ENCODE measurements at regions of chr11 and their contacts with region 1.

Region 1: GRCh38 chr11:9613118-9613829 is 39.8 kb downstream of the WEE1 start:
- DNase-seq: peak; percentile 96
- ATAC-seq: peak; percentile 80
- H3K4me3 ChIP-seq: peak overlapping the region; percentile 63
- H3K27ac ChIP-seq: peak overlapping the region; percentile 86
- H3K4me1 ChIP-seq: peaks cover 26% of the 10 kb centered on the region
- H3K27me3 ChIP-seq: no peaks in the 10 kb centered on the region
- CTCF ChIP-seq: peak; percentile 91

Region 2: GRCh38 chr11:9506489-9507276 is 106.6 kb before region 1 on chr11:
- CTCF ChIA-PET with region 1: interaction called, 6 read pairs
- POLR2A ChIA-PET with region 1: no interaction called
- intact Hi-C with region 1: loop called (anchors 2 kb)
- DNase-seq: peak; percentile 90
- ATAC-seq: peak; percentile 88
- H3K4me3 ChIP-seq: no peak overlapping the region
- H3K27ac ChIP-seq: no peak overlapping the region
- H3K4me1 ChIP-seq: no peaks in the 10 kb centered on the region
- H3K27me3 ChIP-seq: no peaks in the 10 kb centered on the region
- CTCF ChIP-seq: peak; percentile 91

Region 3: GRCh38 chr11:9565822-9566560 is 47.3 kb before region 1 on chr11:
- CTCF ChIA-PET with region 1: no interaction called
- POLR2A ChIA-PET with region 1: no interaction called
- intact Hi-C with region 1: loop called (anchors 1 kb)
- DNase-seq: peak; percentile 99
- ATAC-seq: peak; percentile 83
- H3K4me3 ChIP-seq: peak overlapping the region; percentile 48; the same call in 1 of the 2 replicates
- H3K27ac ChIP-seq: peak overlapping the region; percentile 98
- H3K4me1 ChIP-seq: peaks cover 65% of the 10 kb centered on the region
- H3K27me3 ChIP-seq: no peaks in the 10 kb centered on the region
- CTCF ChIP-seq: no peak

Region 4: DNA sequence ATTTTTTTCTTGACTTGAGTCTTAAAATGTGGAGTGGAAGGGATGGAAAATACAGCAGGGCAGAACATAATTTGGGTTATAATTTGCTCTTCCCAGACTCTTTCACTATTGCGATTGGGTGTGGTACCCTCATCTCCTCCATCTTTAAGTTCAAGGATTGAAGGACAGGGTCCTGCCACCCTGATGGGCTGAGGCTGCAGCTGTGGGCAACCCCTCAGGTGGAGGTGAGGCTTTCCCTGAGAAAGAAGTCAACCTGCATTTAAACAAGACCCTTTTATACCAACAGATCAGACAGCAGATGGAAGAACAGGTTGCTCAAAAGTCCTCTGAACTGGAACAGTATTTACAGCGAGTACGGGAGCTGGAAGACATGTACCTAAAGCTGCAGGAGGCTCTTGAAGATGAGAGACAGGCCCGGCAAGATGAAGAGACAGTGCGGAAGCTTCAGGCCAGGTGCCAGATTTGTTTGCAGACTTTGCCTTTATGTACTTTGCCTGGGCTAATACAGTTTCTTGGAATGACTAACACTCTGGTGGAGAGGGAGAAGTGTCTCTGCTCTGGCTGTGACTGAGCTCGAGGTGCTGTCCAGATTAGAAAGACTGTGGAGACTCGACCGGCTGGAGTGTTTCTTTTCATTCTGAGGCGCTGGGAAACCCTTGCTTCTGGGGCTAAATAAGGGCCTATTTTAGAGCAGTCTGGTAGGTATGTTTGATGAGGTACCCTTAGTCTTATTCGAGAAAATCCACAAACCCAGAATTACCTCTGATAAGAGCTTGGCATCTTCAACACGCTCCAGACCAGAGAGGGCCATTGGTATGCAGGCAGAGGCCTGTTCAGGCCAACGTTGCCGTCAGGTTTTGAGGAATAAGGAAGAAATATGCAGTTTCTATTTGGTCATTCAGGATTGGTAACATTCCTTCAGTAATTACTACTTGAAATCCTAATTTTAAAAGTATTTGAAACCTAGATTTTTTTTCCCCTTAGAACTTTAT is 126.9 kb after region 1 on chr11:
- CTCF ChIA-PET with region 1: no interaction called
- POLR2A ChIA-PET with region 1: no interaction called
- intact Hi-C with region 1: loop called (anchors 2 kb)
- DNase-seq: peak; percentile 70
- ATAC-seq: peak; percentile 88
- H3K4me3 ChIP-seq: no peak overlapping the region
- H3K27ac ChIP-seq: no peak overlapping the region
- H3K4me1 ChIP-seq: peaks cover 13% of the 10 kb centered on the region
- H3K27me3 ChIP-seq: no peaks in the 10 kb centered on the region
- CTCF ChIP-seq: no peak